GM13977 (cell line): ENCODE measurements at regions of chr22 and their contacts with region 1.

Region 1: DNA sequence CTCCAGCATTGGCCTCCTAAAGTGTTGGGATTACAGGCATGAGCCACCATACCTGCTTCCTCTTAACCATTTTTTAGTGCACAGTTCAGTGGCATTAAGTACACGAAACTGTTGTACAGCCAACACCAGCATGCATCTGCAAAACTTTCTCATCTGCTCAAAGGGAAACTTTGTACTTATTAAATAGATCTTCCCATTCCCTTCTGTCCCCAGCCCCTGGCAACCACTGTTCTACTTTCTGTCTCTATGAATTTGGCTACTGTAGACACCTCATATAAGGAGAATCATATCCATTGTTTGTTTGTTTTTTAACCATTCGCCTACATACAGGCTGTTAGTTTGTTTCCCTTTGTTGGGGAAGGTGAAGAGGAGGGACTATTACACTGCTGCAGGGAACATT is 6.5 kb upstream of the EP300 start:
- DNase-seq: no peak
- CTCF ChIP-seq: no peak

Region 2: DNA sequence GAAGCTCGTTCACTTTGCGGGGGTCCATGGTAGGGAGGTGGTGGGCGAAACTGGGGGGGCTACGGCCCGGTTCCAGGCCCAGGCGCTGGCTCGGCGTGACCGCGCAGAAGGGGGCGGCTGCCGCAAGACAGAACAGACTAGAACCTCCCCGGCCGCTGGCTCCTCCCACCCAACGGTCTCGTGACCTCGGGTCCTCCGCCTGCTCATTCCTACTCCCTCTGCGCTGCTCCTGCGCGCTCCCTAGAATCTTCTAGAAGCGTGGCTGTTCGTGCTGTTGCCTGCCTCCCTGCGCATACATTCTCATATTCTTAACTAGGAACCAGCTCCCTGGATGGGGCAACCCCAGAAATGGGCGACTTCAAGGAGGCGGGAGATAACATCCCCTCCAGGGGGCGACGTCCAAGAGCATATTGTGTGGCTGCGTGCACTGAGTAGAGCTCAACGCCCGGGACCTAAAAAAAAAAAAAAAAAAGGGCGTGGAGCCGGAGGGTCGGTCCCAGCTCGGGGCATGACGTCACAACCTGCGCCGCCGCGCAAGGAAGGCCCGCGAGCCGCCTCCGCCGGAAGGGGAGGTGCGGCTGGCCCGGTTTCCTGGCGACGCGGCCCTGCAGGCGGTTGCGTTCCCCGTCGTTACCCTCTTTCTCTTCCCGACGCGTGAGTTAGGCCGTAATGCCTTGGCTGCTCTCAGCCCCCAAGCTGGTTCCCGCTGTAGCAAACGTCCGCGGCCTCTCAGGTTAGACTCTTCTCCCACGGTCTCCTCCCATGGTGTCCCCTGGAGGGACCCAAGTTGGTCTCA is 229.1 kb before region 1 on chr22 and contains the starts of genes ST13 and XPNPEP3:
- in situ Hi-C with region 1: no loop called
- DNase-seq: peak; percentile 90
- CTCF ChIP-seq: peak; percentile 3

Region 3: DNA sequence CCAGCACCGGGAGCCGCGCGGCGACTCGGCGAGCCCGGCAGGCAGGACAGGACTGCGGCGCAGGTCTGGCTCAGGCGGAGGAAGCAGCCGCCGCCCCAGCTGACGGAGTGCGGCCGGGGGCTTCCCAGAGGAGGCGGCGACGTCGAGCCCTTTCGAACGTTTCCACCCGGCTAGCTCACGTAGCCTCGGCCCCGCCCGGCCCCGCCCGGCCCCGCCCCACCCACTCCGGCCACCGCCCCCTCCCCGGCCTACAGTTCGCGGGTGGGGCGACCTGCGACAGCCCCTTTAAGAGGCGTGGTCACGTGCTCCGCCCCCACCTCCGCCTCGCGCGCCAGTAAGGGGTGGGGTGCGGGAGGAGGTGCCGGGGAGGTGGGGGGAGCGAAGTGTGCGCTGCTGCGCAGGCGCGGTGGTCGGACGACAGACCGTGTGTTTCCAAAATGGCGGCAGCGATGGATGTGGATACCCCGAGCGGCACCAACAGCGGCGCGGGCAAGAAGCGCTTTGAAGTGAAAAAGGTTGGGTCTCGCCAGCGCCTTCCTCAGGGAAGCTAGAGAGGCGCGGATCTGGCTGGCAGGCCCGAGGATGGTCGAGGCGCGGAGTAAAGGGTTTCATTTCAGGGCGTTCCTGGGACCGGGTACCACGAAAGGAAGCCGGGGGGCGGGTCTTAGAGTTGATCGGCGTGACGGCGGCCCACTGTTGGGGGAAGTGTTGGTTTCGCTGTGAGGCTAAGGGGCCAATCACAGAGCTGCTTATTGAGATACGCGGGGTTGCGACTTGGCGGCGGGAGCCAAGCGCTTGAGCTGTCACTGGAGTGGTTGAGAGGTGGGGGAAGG is 134.7 kb before region 1 on chr22 and contains the start of gene RBX1:
- in situ Hi-C with region 1: loop called (anchors 10 kb)
- DNase-seq: peak; percentile 96
- CTCF ChIP-seq: no peak

Region 4: GRCh38 chr22:41491374-41492100 is 405.7 kb after region 1 on chr22:
- in situ Hi-C with region 1: no loop called
- DNase-seq: no peak
- CTCF ChIP-seq: no peak